Right ventricle myocardium inferior (tissue), 1 donor: ENCODE measurements at regions of chr6 and their contacts with region 1.

Region 1: DNA sequence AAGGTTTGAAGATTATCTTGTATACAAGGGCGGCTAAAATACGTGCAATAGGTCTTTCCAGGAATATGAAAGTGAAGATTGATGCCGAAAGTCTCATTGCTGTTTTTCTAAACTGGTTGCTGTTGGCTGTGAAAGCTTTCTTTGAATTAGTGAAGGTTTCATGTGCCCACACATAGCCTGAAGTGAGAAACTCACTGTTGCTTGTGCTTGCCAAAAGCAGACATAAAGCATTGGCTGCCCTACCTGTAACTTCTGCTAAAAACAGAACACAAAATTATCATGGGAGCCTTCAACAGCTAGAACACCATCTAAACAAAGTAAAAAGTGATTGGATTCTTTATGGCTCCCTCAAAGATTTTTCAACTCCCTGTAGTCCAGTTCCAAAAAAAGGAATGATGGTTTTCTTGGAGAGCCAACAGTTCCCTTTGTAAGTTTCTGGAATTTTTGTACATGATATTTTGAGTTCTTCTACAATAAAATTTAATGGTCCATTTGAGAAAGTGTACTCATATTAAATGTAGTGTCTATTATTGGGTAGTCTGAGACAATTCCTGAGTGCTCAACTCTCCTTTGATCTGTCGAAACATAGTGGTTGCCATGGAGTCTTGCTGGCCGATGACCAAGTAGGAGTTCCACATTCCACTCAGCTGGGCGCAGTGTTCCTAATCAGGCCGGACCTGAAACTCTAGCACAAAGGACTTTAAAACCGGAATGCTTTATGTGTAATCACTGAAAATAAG is 68.5 kb downstream of the PLEKHG1 start:
- DNase-seq: peak; percentile 89
- ATAC-seq: peak; percentile 93

Region 2: GRCh38 chr6:150486034-150486433 is 182.1 kb before region 1 on chr6:
- intact Hi-C with region 1: no loop called
- DNase-seq: no peak
- ATAC-seq: no peak

Region 3: DNA sequence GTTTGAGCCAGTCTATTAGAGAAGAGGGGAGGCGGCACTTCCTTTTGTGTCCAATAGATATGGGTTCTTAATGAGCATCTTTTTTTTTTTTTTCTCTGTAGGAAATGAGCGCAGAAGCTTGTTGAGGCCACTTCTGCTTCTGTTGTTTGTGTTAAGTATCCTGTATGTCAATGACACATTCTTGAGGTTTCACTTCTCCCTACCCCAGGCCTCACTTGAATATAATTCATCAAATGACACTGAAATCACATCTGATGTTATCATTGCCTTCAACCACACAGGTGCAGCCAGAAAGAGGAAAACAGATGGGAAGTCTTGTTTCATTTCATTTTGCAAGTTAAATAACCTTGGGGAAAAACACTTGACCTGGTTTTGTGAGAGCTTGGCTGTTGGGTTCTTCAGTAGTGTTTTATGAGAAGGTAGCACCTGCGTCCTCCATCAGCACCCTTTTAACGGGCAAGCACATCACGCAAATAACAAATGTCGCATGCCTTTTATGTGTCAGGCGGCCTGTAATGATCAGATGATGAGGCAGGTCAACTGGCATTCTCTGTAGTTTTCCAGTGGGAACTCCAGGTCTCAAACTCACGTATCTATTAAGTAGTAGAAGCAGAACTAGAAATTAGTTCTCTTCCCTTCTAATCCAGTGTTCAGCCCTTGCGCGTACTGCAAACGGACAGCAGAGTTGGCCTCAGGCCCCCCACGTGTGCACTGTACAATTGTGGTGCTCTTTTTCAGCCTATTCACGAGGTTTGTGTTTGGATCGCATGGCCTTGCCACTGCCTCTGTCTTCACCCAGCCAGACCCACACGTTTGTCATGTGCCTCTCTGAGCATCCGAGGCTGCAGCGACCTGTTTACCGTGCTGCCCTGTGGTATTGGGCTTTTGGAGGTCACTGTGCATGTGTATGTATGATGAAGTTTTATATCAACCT is 44.9 kb before region 1 on chr6:
- intact Hi-C with region 1: loop called (anchors 5 kb)
- DNase-seq: no peak
- ATAC-seq: peak; percentile 30

Region 4: DNA sequence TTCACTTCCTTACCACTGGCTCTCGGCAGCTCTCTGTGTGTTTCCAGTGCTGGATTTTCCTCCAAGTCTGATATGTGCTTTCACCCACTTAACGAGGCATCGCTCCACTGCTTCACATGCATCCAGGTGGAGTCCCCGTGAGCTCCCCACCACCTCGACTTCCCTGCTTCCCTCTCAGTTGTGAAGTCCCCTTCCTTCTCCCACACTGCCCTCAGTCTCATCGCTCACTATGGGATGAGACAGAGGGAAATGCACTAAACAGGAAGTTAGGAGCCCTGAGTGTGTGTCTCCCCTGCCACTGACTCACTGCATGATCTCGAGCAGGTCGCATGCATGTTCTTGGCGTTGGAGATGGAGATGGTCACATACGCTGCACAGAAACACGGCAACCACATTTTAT is 281.4 kb after region 1 on chr6:
- intact Hi-C with region 1: no loop called
- DNase-seq: no peak
- ATAC-seq: no peak